Activated T-helper 2 cell treated with anti-CD3 and anti-CD28 coated beads, Interferon-gamma antibody, Interleukin-2, Interleukin-4, amounts not matched to agents 10 μg/mL and 5 μg/mL and 100 μg/mL, durations not matched to agents 14 hours and 24 hours and 36 hours (primary cell): ENCODE measurements at regions of chr18 and their contacts with region 1.

Region 1: GRCh38 chr18:9876867-9877654 is 8.7 kb upstream of the TXNDC2 start:
- DNase-seq: peak; percentile 28
- H3K4me3 Mint-ChIP-seq: peak overlapping the region; percentile 9
- H3K27ac Mint-ChIP-seq: peak overlapping the region; percentile 81
- H3K4me1 Mint-ChIP-seq: peaks cover 25% of the 10 kb centered on the region
- H3K27me3 Mint-ChIP-seq: no peaks in the 10 kb centered on the region

Region 2: GRCh38 chr18:9861157-9861556 is 15.9 kb before region 1 on chr18:
- intact Hi-C with region 1: loop called (anchors 1 kb)
- DNase-seq: no peak
- H3K4me3 Mint-ChIP-seq: no peak overlapping the region
- H3K27ac Mint-ChIP-seq: peak overlapping the region; percentile 95
- H3K4me1 Mint-ChIP-seq: peaks cover 32% of the 10 kb centered on the region
- H3K27me3 Mint-ChIP-seq: peaks cover 6% of the 10 kb centered on the region

Region 3: GRCh38 chr18:9898792-9899549 is 21.9 kb after region 1 on chr18:
- intact Hi-C with region 1: loop called (anchors 1 kb)
- DNase-seq: no peak
- H3K4me3 Mint-ChIP-seq: peak overlapping the region; percentile 27
- H3K27ac Mint-ChIP-seq: peak overlapping the region; percentile 80
- H3K4me1 Mint-ChIP-seq: peaks cover 32% of the 10 kb centered on the region
- H3K27me3 Mint-ChIP-seq: no peaks in the 10 kb centered on the region